WTC11 (cell line): ENCODE measurements at regions of chr11 and their contacts with region 1.

Region 1: DNA sequence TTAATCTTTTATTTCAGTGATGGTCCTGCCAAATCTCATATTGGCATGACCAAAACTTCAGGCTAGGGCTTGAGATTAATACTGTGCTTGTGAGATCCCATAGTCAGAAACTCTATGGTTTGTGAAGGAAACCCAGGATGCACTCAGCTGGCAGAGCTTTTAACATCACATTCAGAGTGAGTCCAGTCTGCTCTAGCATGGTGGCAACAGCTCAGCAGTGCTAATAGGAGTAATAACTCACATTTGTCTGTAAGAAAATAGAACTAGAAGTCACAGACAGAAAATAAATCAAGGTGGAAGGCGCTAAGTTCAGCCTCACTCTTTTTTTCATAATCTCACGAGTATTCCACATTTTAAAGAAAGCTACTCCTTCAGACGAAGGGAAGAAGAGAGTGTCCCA is 549.3 kb upstream of the TENM4 start:
- DNase-seq: no peak
- ATAC-seq: no peak
- H3K4me3 Mint-ChIP-seq: no peak overlapping the region
- H3K27ac Mint-ChIP-seq: no peak overlapping the region
- H3K4me1 Mint-ChIP-seq: no peaks in the 10 kb centered on the region
- H3K27me3 Mint-ChIP-seq: no peaks in the 10 kb centered on the region
- CTCF ChIP-seq: no peak

Region 2: GRCh38 chr11:81548123-81548522 is 1558.0 kb after region 1 on chr11:
- CTCF ChIA-PET with region 1: no interaction called
- POLR2A ChIA-PET with region 1: interaction called, 12 read pairs
- DNase-seq: no peak
- ATAC-seq: no peak
- H3K4me3 Mint-ChIP-seq: no peak overlapping the region
- H3K27ac Mint-ChIP-seq: no peak overlapping the region
- H3K4me1 Mint-ChIP-seq: no peaks in the 10 kb centered on the region
- H3K27me3 Mint-ChIP-seq: no peaks in the 10 kb centered on the region
- CTCF ChIP-seq: no peak